ENCODE measurements at regions of chr13 and their contacts with region 1.

Region 1: GRCh38 chr13:31248965-31249539 is 49.3 kb downstream of the B3GLCT start:
- DNase-seq: no peak
- H3K4me3 ChIP-seq: no peak overlapping the region
- CTCF ChIP-seq: no peak

Region 2: GRCh38 chr13:31314961-31315360 is 65.9 kb after region 1 on chr13:
- in situ Hi-C with region 1: loop called (anchors 5 kb)
- DNase-seq: no peak
- H3K4me3 ChIP-seq: no peak overlapping the region
- CTCF ChIP-seq: no peak

Measured in astrocyte of the cerebellum (primary cell).